A673 (cell line): ENCODE measurements at regions of chr7 and their contacts with region 1.

Region 1: GRCh38 chr7:5243261-5243660 is 39.5 kb upstream of the SLC29A4 start:
- DNase-seq: no peak
- H3K4me3 ChIP-seq: no peak overlapping the region
- H3K27ac ChIP-seq: no peak overlapping the region
- H3K4me1 ChIP-seq: peaks cover 9% of the 10 kb centered on the region
- H3K27me3 ChIP-seq: no peaks in the 10 kb centered on the region
- CTCF ChIP-seq: no peak

Region 2: DNA sequence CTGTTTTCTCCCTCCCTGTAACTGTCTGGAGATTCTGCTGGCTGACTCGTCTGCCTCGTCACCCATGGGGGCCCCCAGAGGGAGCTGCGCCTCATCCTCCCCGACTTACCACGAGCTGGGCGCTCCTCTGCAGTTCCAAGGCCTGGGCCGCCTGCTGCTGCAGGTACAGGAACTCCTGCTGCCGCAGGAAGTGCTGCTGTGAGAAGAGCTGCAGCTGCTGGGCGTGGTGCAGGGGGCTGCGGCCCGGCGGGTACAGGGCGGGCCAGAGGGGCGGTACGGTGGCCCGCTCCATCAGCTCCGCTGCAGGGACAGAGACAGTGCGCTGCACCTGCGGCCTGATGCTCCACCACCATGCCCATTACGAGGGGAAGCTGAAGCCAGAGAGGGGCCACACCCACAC is 132.7 kb after region 1 on chr7:
- CTCF ChIA-PET with region 1: no interaction called
- POLR2A ChIA-PET with region 1: no interaction called
- intact Hi-C with region 1: no loop called
- DNase-seq: no peak
- H3K4me3 ChIP-seq: no peak overlapping the region
- H3K27ac ChIP-seq: no peak overlapping the region
- H3K4me1 ChIP-seq: no peaks in the 10 kb centered on the region
- H3K27me3 ChIP-seq: no peaks in the 10 kb centered on the region
- CTCF ChIP-seq: no peak

Region 3: GRCh38 chr7:5423844-5424688 is 180.8 kb after region 1 on chr7:
- CTCF ChIA-PET with region 1: no interaction called
- POLR2A ChIA-PET with region 1: no interaction called
- intact Hi-C with region 1: no loop called
- DNase-seq: peak; percentile 99
- H3K4me3 ChIP-seq: peak overlapping the region; percentile 79
- H3K27ac ChIP-seq: peak overlapping the region; percentile 99
- H3K4me1 ChIP-seq: peaks cover 17% of the 10 kb centered on the region
- H3K27me3 ChIP-seq: no peaks in the 10 kb centered on the region
- CTCF ChIP-seq: no peak

Region 4: GRCh38 chr7:5462216-5462615 is 219.0 kb after region 1 on chr7:
- CTCF ChIA-PET with region 1: interaction called, 3 read pairs
- POLR2A ChIA-PET with region 1: no interaction called
- intact Hi-C with region 1: loop called (anchors 5 kb)
- DNase-seq: no peak
- H3K4me3 ChIP-seq: no peak overlapping the region
- H3K27ac ChIP-seq: no peak overlapping the region
- H3K4me1 ChIP-seq: no peaks in the 10 kb centered on the region
- H3K27me3 ChIP-seq: no peaks in the 10 kb centered on the region
- CTCF ChIP-seq: no peak